ENCODE measurements at regions of chr20 and their contacts with region 1.

Region 1: GRCh38 chr20:50744143-50744792 is 12.9 kb downstream of the PARD6B start:
- DNase-seq: peak; percentile 88
- ATAC-seq: peak; percentile 92
- H3K4me3 ChIP-seq: no peak overlapping the region
- H3K27ac ChIP-seq: peak overlapping the region; percentile 92
- H3K4me1 ChIP-seq: peaks cover 17% of the 10 kb centered on the region
- H3K27me3 ChIP-seq: no peaks in the 10 kb centered on the region
- CTCF ChIP-seq: peak; percentile 75
- POLR2A ChIP-seq: no peak
- RAD21 ChIP-seq: peak; percentile 85

Region 2: GRCh38 chr20:50460460-50461267 is 283.6 kb before region 1 on chr20:
- CTCF ChIA-PET with region 1: no interaction called
- POLR2A ChIA-PET with region 1: no interaction called
- dilution Hi-C with region 1: no loop called
- in situ Hi-C with region 1: loop called (anchors 10 kb)
- intact Hi-C with region 1: loop called (anchors 10 kb)
- DNase-seq: peak; percentile 75
- ATAC-seq: peak; percentile 91
- H3K4me3 ChIP-seq: no peak overlapping the region
- H3K27ac ChIP-seq: peak overlapping the region; percentile 4; the same call in 1 of the 2 replicates
- H3K4me1 ChIP-seq: peaks cover 13% of the 10 kb centered on the region
- H3K27me3 ChIP-seq: no peaks in the 10 kb centered on the region
- CTCF ChIP-seq: peak; percentile 91
- POLR2A ChIP-seq: peak; percentile 41; the same call in 1 of the 2 replicates
- RAD21 ChIP-seq: peak; percentile 96

Region 3: GRCh38 chr20:50509935-50510705 is 234.1 kb before region 1 on chr20 and contains the start of gene PTPN1:
- CTCF ChIA-PET with region 1: interaction called, 8 read pairs
- POLR2A ChIA-PET with region 1: no interaction called
- dilution Hi-C with region 1: no loop called
- in situ Hi-C with region 1: no loop called
- intact Hi-C with region 1: loop called (anchors 2 kb)
- DNase-seq: peak; percentile 99
- ATAC-seq: peak; percentile 96
- H3K4me3 ChIP-seq: peak within 1 kb of the TSS; percentile 72
- H3K27ac ChIP-seq: peak within 1 kb of the TSS; percentile 72
- H3K4me1 ChIP-seq: peaks cover 13% of the 10 kb centered on the region
- H3K27me3 ChIP-seq: no peaks in the 10 kb centered on the region
- CTCF ChIP-seq: 0 out of 2 replicates have a peak, but pooled peaks have one; percentile 13
- POLR2A ChIP-seq: peak; percentile 99
- RAD21 ChIP-seq: peak; percentile 32
- total RNA-seq, gene PTPN1: 31.7 and 38.0 TPM in 2 replicates

Region 4: DNA sequence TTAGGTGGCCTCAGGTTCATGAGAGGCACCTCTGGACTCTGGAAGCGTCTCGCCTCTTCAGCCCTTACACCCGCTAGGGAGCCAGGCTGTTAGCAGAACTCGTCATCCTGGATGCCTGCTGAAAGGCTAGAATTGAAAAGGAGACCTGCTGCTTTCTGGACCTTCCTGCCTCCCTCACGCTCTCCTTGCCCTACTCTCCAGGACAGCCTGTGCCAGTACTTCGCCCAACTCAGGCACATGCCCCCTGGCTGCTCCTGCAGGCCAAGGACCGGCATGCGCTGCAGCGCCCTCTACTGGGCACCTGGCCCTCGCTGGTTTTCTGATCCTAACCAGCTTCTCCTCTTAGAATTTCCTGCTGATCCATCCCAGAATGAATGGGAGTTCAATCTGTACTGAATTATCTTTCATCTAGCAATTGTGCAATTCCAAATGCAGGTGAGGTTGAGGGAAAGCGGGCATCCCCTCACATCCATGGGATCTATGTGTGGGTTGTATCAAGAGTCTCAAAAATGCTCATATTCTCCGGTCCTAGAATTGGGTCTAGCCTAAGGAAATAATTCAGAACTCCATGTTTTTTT is 156.1 kb before region 1 on chr20:
- CTCF ChIA-PET with region 1: no interaction called
- POLR2A ChIA-PET with region 1: interaction called, 5 read pairs
- dilution Hi-C with region 1: no loop called
- in situ Hi-C with region 1: no loop called
- intact Hi-C with region 1: loop called (anchors 1 kb)
- DNase-seq: peak; percentile 58
- ATAC-seq: peak; percentile 67
- H3K4me3 ChIP-seq: no peak overlapping the region
- H3K27ac ChIP-seq: no peak overlapping the region
- H3K4me1 ChIP-seq: no peaks in the 10 kb centered on the region
- H3K27me3 ChIP-seq: no peaks in the 10 kb centered on the region
- CTCF ChIP-seq: peak; percentile 93
- POLR2A ChIP-seq: 0 out of 2 replicates have a peak, but pooled peaks have one; percentile 23
- RAD21 ChIP-seq: peak; percentile 68

Region 5: DNA sequence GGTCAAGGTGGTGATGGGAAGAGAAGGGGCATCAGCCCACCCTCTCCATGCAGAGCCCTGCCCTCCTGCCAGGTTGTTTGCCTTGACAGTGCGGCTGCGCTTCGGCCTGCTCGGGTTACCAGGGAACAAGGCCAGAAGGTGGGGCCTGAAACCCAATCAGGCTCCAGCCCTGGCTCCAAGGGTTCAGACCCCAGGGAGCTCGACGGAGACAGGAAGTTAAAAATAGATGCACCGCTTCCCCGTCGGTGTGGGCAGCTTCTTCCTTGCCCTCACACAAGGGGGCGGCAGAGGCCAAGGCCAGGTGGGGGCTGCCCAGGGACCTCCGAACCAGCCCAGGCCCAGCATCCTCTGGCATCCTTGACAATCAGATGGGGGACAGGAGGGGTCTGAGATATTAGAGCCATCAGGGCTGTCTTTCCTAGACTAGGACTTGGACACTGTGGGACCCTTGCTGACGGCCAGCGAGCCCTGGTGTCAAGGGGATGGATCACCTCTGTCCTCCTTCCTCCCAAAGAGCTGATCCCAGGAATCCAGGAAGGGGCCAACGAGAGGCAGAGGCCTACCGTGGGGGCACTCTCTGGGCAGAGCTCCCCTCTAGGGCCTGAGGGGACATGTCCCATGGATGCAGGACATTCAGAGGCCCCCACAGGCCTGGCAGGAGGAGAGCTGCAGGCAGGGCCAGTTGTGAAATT is 118.1 kb before region 1 on chr20:
- CTCF ChIA-PET with region 1: no interaction called
- POLR2A ChIA-PET with region 1: no interaction called
- dilution Hi-C with region 1: no loop called
- in situ Hi-C with region 1: loop called (anchors 5 kb)
- intact Hi-C with region 1: loop called (anchors 1 kb)
- DNase-seq: peak; percentile 39
- ATAC-seq: peak; percentile 79
- H3K4me3 ChIP-seq: no peak overlapping the region
- H3K27ac ChIP-seq: no peak overlapping the region
- H3K4me1 ChIP-seq: peaks cover 5% of the 10 kb centered on the region; the same call in 1 of the 2 replicates
- H3K27me3 ChIP-seq: no peaks in the 10 kb centered on the region
- CTCF ChIP-seq: peak; percentile 78
- POLR2A ChIP-seq: no peak; the same call in 1 of the 2 replicates
- RAD21 ChIP-seq: peak; percentile 88

Region 6: DNA sequence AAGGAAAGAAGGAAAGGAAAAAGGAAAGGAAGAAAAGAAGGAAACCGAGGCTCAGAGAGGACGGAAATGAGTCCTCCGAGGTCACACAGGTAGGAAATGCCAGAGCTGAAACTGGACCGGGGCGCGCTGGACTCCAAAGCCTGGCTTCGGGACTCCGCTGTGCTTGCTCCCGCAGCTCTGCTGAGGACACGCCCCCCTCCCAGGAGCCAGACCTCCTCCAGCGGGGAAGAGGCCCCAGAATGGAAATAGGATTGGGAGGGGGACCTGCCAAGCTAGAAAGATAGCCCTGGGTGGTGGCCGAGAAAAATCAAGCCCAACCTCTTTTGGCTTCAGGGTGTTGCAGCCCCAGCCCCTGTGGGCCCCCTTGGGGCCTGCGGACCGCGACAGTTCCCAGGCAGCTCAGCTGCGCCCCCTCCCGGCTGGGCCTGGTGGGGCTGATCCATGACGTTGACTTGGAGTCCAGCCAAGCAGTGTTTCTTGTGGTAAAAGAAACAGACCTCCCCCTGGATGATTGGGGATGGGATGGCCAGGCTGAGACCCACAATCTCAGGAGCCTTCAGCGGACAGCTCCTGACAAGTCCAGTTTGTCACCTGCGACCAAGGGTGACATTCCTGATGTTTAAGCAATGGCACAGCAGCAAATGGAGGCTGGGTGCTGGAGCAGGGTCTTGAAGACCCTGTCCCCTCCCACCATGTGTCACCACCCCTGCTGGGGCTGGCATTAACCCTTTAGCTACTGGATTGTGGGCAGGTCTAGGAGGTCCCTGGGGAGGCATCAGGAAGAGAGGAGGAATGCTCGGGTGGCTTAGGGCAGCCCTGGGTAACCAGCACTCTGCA is 108.4 kb before region 1 on chr20:
- CTCF ChIA-PET with region 1: interaction called, 4 read pairs
- POLR2A ChIA-PET with region 1: interaction called, 6 read pairs
- dilution Hi-C with region 1: no loop called
- in situ Hi-C with region 1: loop called (anchors 5 kb)
- intact Hi-C with region 1: no loop called
- DNase-seq: peak; percentile 49
- ATAC-seq: peak; percentile 57
- H3K4me3 ChIP-seq: peak overlapping the region; percentile 3; the same call in 1 of the 2 replicates
- H3K27ac ChIP-seq: peak overlapping the region; percentile 100
- H3K4me1 ChIP-seq: peaks cover 25% of the 10 kb centered on the region
- H3K27me3 ChIP-seq: no peaks in the 10 kb centered on the region
- CTCF ChIP-seq: peak; percentile 87
- POLR2A ChIP-seq: no peak
- RAD21 ChIP-seq: peak; percentile 57